Breast epithelium (tissue), 4 donors: ENCODE measurements at regions of chr16 and their contacts with region 1.

Region 1: GRCh38 chr16:31513884-31514283 is 5.7 kb upstream of the RUSF1 start:
- DNase-seq: no peak
- H3K4me3 ChIP-seq: no peak overlapping the region
- H3K27ac ChIP-seq: no peak overlapping the region
- H3K4me1 ChIP-seq: no peaks in the 10 kb centered on the region
- H3K27me3 ChIP-seq: no peaks in the 10 kb centered on the region
- CTCF ChIP-seq: no peak
- POLR2A ChIP-seq: no peak

Region 2: GRCh38 chr16:31484491-31485171 is 29.3 kb before region 1 on chr16:
- intact Hi-C with region 1: loop called (anchors 1 kb)
- DNase-seq: no peak
- H3K4me3 ChIP-seq: no peak overlapping the region
- H3K27ac ChIP-seq: peak overlapping the region in 1 of 2 donors; percentile 19
- H3K4me1 ChIP-seq: peaks cover 4 to 5% of the 10 kb centered on the region in 2 donors
- H3K27me3 ChIP-seq: peaks cover 0 to 3% of the 10 kb centered on the region in 2 donors
- CTCF ChIP-seq: no peak
- POLR2A ChIP-seq: no peak